BJ (cell line): ENCODE measurements at regions of chr4 and their contacts with region 1.

Region 1: DNA sequence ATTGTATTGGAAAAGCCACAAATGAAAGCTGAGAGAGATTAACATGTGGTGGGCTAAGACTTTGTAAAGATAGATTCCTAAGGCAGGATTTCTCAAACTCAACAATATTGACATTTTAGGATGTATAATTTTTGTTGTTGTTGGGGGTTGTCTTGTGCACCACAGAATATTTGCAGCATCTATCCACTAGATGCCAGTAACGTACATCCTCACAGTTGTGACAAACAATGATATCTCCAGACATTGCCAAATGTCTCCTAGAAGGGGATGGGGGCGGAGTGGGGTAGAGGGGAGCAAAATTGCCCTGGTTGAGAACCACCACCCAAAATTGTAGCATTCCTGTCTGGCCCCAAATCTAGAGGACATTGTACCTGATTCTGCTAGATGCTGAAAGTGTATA is 14.7 kb upstream of the CBR4 start:
- DNase-seq: no peak
- H3K4me3 ChIP-seq: no peak overlapping the region
- H3K27me3 ChIP-seq: no peaks in the 10 kb centered on the region
- CTCF ChIP-seq: peak; percentile 72

Region 2: DNA sequence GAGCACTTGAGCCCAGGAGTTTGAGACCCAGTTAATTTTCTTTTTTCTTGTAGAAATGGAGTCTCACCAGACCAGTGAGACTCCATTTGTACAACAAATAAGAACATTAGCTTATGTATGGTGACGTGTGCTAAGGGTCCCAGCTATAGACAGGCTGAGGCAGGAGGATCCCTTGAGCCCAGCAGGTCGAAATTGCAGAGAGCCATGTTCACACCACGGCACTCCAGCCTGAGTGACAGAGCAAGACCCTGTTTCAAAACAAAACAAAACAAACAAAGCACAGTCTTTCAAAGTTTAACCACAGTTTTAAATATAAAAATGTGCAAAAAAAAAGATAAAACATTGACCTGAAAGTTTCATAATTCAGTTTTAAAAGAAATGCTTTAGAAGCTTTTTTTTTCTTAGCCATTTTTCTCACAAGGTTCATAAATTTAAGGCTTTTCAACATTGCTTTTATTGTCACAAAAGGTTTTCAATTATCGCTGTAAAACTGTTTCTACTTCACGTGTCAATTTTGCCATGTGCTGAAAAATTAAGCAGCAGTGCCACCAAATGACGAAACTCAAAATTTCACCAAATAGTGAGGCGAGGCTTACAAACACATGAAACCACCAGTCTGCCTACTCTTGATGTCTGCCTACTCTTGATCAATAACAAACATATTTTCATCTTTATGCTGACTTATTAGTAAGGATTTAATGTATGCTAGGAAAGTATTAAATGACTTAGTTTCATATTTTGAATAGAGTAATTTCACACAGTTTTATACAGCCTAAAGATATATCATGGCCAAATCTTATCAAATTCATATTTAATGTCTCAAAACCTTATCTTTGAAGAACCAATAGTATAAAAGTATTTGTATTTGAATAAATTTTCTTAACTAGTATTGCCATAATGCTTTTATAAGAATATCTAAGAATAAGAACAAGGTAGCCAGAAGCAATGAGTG is 461.3 kb after region 1 on chr4:
- CTCF ChIA-PET with region 1: interaction called, 13 read pairs
- POLR2A ChIA-PET with region 1: no interaction called
- DNase-seq: peak; percentile 16
- H3K4me3 ChIP-seq: no peak overlapping the region
- H3K27me3 ChIP-seq: no peaks in the 10 kb centered on the region
- CTCF ChIP-seq: peak; percentile 41